ENCODE measurements at regions of chr2 and their contacts with region 1.

Region 1: DNA sequence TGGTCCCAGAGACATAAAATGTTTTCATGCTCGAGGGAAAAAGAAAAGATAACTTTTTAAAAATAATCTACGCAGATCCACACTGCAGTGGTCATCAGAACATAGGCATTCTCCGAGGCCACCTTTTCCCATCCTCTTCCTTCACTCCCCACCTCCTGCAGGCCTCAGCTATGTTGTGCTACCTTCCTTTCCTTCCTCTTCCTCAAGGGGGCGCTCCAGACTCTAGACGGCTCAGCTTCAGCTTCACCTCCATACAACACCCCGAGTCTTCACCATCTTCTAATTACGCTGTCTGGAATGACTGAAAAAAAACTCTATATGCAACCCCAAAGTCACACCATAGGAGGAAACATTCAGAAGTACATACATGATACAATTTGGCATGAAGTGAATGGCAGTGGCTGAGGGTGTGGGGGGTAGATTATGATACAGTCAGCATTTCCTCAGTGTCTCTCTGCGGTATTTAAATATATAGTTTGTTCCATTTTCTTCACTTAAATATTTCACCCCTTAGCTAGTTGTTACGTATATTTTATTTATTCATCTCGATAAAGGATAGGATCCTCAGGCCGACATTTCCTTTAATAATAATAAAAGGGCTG is 583.6 kb downstream of the IRS1 start:
- DNase-seq: peak; percentile 63
- ATAC-seq: peak; percentile 99
- H3K4me3 ChIP-seq: no peak overlapping the region
- H3K27ac ChIP-seq: no peak overlapping the region
- H3K4me1 ChIP-seq: 0 out of 2 replicates have a peak, but pooled peaks cover 5% of the 10 kb centered on the region
- H3K27me3 ChIP-seq: no peaks in the 10 kb centered on the region
- CTCF ChIP-seq: peak; percentile 89
- EP300 ChIP-seq: peak in 1 of 2 experiments; percentile 45; a peak in 1 of 4 replicates
- POLR2A ChIP-seq: no peak
- RAD21 ChIP-seq: peak; percentile 78

Region 2: GRCh38 chr2:226151132-226151531 is 64.9 kb before region 1 on chr2:
- CTCF ChIA-PET with region 1: no interaction called
- POLR2A ChIA-PET with region 1: no interaction called
- in situ Hi-C with region 1: no loop called
- intact Hi-C with region 1: no loop called
- DNase-seq: no peak
- ATAC-seq: no peak
- H3K4me3 ChIP-seq: no peak overlapping the region
- H3K27ac ChIP-seq: no peak overlapping the region
- H3K4me1 ChIP-seq: peaks cover 32% of the 10 kb centered on the region
- H3K27me3 ChIP-seq: no peaks in the 10 kb centered on the region
- CTCF ChIP-seq: no peak
- EP300 ChIP-seq: no peak
- POLR2A ChIP-seq: no peak
- RAD21 ChIP-seq: no peak

Region 3: GRCh38 chr2:226791487-226792081 is 575.6 kb after region 1 on chr2:
- CTCF ChIA-PET with region 1: no interaction called
- POLR2A ChIA-PET with region 1: no interaction called
- in situ Hi-C with region 1: loop called (anchors 10 kb)
- intact Hi-C with region 1: no loop called
- DNase-seq: no peak
- ATAC-seq: no peak
- H3K4me3 ChIP-seq: no peak overlapping the region
- H3K27ac ChIP-seq: peak overlapping the region; percentile 26
- H3K4me1 ChIP-seq: peaks cover 74% of the 10 kb centered on the region
- H3K27me3 ChIP-seq: no peaks in the 10 kb centered on the region
- CTCF ChIP-seq: no peak
- EP300 ChIP-seq: no peak
- POLR2A ChIP-seq: no peak
- RAD21 ChIP-seq: no peak